MCF 10A (cell line): ENCODE measurements at regions of chr5 and their contacts with region 1.

Region 1: GRCh38 chr5:176537608-176538504 is 654 bp upstream of the RNF44 start:
- DNase-seq: peak; percentile 100
- H3K4me3 Mint-ChIP-seq: peak overlapping the region; percentile 91
- H3K27ac Mint-ChIP-seq: peak overlapping the region; percentile 98
- H3K4me1 Mint-ChIP-seq: peaks cover 56% of the 10 kb centered on the region
- H3K27me3 Mint-ChIP-seq: no peaks in the 10 kb centered on the region
- CTCF ChIP-seq: no peak

Region 2: DNA sequence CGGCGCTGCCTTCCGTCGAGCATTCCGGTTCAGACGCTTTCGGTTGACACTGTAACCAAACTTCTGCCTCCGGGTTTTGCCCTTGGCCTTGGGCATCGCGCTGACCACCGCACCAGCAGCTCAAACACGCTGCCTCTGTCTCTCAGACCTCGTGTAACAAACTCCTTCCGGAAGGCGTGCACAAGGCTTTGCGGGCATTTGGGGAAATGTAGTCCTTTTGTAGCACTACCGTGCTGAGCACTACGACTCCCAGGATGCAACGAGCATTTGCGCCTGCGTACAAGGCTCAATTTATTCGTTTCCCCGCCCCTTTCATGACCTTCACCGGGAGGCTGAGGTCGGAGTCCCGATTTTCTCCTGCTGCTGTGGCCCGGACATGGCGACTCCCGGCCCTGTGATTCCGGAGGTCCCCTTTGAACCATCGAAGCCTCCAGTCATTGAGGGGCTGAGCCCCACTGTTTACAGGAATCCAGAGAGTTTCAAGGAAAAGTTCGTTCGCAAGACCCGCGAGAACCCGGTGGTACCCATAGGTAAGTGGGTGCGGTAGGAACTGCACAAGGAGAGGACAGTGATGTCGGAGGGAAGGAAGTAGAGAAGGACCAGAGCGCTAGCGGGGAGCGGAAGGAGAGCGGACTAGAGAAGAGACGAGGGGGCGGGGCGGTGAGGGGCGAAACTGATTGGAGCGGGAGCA is 149.3 kb before region 1 on chr5 and contains the starts of genes HIGD2A and NOP16:
- CTCF ChIA-PET with region 1: interaction called, 4 read pairs
- POLR2A ChIA-PET with region 1: interaction called, 51 read pairs
- intact Hi-C with region 1: no loop called
- DNase-seq: peak; percentile 100
- H3K4me3 Mint-ChIP-seq: peak within 1 kb of the TSS; percentile 98
- H3K27ac Mint-ChIP-seq: peak within 1 kb of the TSS; percentile 99
- H3K4me1 Mint-ChIP-seq: peaks cover 22% of the 10 kb centered on the region
- H3K27me3 Mint-ChIP-seq: no peaks in the 10 kb centered on the region
- CTCF ChIP-seq: no peak
- total RNA-seq, gene HIGD2A: 167 and 196 TPM in 2 replicates
- total RNA-seq, gene NOP16: 90.9 and 134 TPM in 2 replicates

Region 3: DNA sequence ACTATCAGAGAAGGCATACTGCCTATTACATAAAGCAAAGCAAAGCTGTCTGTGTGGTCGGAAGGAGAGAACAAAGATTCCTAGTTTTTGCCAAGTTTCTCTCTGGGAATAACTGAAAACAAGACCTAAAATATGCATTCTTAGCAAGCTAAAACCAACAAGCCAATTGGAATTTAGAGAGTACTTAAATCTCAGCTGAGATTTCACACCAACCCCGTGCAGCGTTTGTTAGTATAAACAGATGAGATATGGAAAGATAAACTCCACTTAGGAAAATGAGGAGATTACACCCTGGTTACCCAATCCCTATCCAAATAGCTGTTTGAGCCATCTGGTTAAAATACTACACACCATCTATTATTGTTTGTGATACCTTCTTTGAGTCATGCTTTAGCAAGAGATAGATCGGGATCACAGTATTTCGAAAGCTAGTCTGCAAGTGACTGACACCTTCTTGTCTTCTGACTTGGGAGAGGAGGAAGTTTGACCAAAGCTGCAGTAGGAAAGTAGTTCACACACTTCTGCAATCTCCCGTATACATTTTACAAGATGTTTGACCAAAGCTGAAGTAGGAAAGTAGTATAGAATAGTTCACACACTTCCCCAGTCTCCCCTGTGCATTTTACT is 71.5 kb before region 1 on chr5:
- CTCF ChIA-PET with region 1: interaction called, 11 read pairs
- POLR2A ChIA-PET with region 1: interaction called, 70 read pairs
- intact Hi-C with region 1: no loop called
- DNase-seq: peak; percentile 84
- H3K4me3 Mint-ChIP-seq: peak overlapping the region; percentile 11
- H3K27ac Mint-ChIP-seq: peak overlapping the region; percentile 24
- H3K4me1 Mint-ChIP-seq: peaks cover 35% of the 10 kb centered on the region
- H3K27me3 Mint-ChIP-seq: no peaks in the 10 kb centered on the region
- CTCF ChIP-seq: no peak

Region 4: GRCh38 chr5:176501333-176501732 is 36.5 kb before region 1 on chr5:
- CTCF ChIA-PET with region 1: interaction called, 5 read pairs
- POLR2A ChIA-PET with region 1: interaction called, 154 read pairs
- intact Hi-C with region 1: loop called (anchors 2 kb)
- DNase-seq: no peak
- H3K4me3 Mint-ChIP-seq: no peak overlapping the region
- H3K27ac Mint-ChIP-seq: no peak overlapping the region
- H3K4me1 Mint-ChIP-seq: peaks cover 6% of the 10 kb centered on the region
- H3K27me3 Mint-ChIP-seq: no peaks in the 10 kb centered on the region
- CTCF ChIP-seq: no peak

Region 5: DNA sequence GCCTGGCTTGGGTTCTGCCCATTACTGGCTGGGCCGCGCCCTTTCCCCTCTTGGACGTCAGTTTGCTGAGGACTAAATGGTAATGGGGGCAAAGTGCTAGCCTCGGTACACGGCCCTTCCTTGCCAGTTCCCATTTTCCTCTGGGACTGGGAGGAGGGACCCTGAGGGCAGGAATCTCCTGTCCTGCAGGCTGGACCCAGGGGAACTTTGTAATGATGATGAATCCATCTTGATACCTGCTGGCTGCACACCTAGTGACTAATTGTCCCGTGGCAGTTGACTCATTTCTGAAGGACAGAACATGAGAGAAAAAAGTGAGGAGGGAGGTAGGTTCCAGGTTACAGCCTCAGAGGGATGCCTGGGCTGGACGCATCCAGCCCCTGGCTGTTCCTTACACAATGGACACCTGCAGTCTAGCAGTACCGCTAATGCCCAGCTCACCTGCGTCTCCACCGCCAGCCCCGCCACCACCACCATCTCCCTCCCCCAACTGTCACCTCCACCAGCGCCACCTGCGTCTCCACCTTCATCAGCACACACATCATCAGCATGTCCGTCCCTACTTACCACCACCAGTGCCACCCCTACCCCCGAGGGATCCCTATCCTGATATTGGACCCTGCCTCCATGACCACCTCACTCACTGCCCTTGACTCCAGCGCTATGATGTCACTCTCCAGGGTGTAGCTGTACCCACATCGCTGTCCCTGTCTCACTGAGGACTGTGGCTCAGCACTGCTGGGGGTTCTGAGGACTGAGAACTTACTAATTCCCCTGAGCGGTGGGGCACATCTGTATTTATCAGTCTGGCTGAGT is 15.6 kb after region 1 on chr5:
- CTCF ChIA-PET with region 1: interaction called, 8 read pairs
- POLR2A ChIA-PET with region 1: interaction called, 38 read pairs
- intact Hi-C with region 1: no loop called
- DNase-seq: peak; percentile 90
- H3K4me3 Mint-ChIP-seq: peak overlapping the region; percentile 6
- H3K27ac Mint-ChIP-seq: peak overlapping the region; percentile 39
- H3K4me1 Mint-ChIP-seq: peaks cover 25% of the 10 kb centered on the region
- H3K27me3 Mint-ChIP-seq: no peaks in the 10 kb centered on the region
- CTCF ChIP-seq: no peak

Region 6: DNA sequence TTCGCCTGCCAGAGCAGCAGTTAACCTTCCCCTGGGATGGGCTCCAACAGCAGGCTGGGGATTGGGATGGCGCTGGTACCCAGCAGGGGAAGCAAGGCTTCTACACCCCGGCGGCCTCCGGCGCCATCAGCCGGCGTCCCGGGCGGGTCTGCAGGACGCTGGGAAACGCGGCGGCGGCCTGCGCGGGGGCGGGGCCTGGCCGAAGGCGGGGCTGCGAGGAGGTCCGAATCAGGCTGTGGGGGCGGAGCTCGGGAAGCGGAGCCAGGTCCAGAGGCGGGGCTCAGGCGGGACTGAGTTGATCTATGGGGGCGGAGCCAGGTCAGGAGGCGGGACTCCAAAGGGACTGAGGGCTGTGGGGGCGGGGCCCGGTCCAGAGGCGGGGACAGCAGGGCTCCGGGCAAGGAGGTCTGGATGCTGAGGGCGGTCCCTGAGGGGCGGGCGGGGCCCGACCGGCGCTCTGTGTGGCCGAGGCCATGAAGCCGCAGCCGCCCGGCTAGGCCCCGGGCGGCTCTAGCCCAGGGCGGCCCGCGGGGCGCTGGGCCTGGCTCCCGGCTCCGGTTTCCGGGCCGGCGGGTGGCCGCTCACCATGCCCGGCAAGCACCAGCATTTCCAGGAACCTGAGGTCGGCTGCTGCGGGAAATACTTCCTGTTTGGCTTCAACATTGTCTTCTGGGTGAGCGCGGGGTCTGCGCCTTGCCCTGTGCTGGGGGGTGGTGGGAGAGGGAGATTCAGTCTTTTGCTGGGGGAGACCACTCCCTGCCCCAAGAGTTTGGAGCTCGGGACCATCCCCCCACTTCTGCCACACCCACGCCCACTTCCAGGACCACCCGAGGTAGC is 109.4 kb after region 1 on chr5 and contains the start of gene TSPAN17:
- CTCF ChIA-PET with region 1: interaction called, 3 read pairs
- POLR2A ChIA-PET with region 1: interaction called, 22 read pairs
- intact Hi-C with region 1: no loop called
- DNase-seq: peak; percentile 100
- H3K4me3 Mint-ChIP-seq: peak within 1 kb of the TSS; percentile 80
- H3K27ac Mint-ChIP-seq: peak within 1 kb of the TSS; percentile 76
- H3K4me1 Mint-ChIP-seq: peaks cover 21% of the 10 kb centered on the region
- H3K27me3 Mint-ChIP-seq: no peaks in the 10 kb centered on the region
- CTCF ChIP-seq: peak; percentile 49
- total RNA-seq, gene TSPAN17: 36.7 and 47.5 TPM in 2 replicates